B cell (primary cell): ENCODE measurements at regions of chr1 and their contacts with region 1.

Region 1: DNA sequence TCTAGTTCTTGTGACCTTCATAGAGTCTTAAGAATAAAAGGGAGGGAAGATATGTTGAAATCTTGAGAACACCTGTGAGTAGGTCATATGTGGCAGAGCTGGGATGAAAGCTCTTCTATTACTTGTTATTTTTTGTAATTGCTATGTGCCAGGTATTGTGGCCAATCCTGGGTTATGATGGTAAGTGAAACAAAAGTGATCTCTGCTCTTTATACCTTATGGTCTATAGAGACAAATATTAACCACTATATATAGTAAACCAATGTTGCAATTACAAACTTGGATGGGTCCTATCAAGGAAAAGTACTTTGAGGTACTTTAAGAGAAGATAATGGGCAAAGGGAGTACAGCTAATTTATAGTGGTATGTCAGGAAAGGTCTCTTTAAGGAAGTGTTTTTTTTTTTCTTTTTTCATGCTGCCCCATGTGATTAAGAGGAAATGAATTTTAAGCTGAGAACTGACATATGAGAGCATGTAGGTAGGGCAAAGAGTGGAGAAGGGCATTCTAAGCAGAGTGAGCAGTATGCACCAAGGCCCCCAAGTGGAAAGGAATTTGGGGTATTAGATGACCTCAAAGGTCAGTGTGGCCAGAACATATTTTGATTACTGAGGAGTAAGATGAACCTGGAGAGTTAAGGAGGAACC is 43.3 kb downstream of the POU2F1 start:
- DNase-seq: peak; percentile 56
- ATAC-seq: peak; percentile 67
- H3K4me3 ChIP-seq: no peak overlapping the region
- H3K4me3 Mint-ChIP-seq: no peak overlapping the region
- H3K27ac ChIP-seq: peak overlapping the region in 1 of 2 donors; percentile 29
- H3K27ac Mint-ChIP-seq: no peak overlapping the region
- H3K4me1 ChIP-seq: peaks cover 37% of the 10 kb centered on the region in 2 donors
- H3K4me1 Mint-ChIP-seq: peaks cover 25% of the 10 kb centered on the region
- H3K27me3 ChIP-seq: no peaks in the 10 kb centered on the region
- H3K27me3 Mint-ChIP-seq: no peaks in the 10 kb centered on the region
- CTCF ChIP-seq: no peak

Region 2: DNA sequence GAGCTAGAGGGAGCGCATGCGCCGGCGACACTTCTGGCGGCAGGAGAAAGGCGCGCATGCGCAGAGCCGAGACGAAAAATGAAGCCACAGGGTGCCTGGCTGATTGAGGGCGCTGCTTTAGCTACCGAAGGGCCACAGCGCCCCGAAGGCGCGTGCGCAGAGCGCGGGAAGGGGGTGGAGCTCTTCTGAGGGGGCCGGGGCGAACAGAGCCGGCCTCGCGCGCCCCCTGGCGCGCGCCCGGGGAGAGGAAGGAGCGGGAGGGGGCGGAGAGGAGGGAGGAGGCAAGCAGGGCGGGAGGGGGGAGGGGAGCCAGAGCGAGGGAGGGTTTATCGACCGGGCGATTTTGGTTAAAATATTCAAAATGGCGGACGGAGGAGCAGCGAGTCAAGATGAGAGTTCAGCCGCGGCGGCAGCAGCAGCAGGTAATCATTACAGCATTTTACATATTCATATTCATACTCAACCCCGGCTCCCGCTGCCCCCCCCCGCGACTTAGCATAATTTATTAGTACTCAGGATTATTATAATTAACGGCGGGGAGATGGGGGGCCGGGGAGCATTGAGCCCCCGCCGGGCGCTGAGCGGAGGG is 43.3 kb before region 1 on chr1 and contains the start of gene POU2F1:
- CTCF ChIA-PET with region 1: interaction called, 17 read pairs
- POLR2A ChIA-PET with region 1: interaction called, 5 read pairs
- intact Hi-C with region 1: loop called (anchors 5 kb)
- DNase-seq: peak; percentile 100
- ATAC-seq: peak; percentile 72
- H3K4me3 ChIP-seq: peak within 1 kb of the TSS; percentile 70 to 99 (median 88)
- H3K4me3 Mint-ChIP-seq: peak within 1 kb of the TSS; percentile 93
- H3K27ac ChIP-seq: peak within 1 kb of the TSS; percentile 92 to 96
- H3K27ac Mint-ChIP-seq: peak within 1 kb of the TSS; percentile 98
- H3K4me1 ChIP-seq: peaks cover 23 to 26% of the 10 kb centered on the region in 2 donors
- H3K4me1 Mint-ChIP-seq: peaks cover 42% of the 10 kb centered on the region
- H3K27me3 ChIP-seq: no peaks in the 10 kb centered on the region
- H3K27me3 Mint-ChIP-seq: no peaks in the 10 kb centered on the region
- CTCF ChIP-seq: peak; percentile 61
- total RNA-seq, gene POU2F1: 47.4 and 48.8 TPM in 2 replicates

Region 3: DNA sequence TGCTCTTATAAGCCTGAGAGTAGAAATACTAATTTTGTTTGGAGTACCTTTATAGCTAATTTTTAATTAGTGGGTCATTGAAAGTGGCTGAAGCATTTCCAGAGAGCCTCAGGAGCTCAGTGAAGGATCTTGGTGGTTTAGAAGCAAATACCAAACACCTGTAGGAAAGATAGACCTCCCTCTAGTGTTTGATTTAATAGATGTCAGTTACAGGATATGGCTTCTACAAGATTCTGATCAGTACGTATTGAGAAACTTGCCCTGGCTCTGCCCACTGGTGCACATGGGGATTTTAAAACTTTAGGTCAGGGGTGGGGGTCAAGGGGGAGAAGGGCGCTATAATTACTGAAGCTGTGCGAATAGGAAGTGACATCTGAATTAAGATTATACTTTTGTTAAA is 78.9 kb after region 1 on chr1:
- CTCF ChIA-PET with region 1: interaction called, 188 read pairs
- POLR2A ChIA-PET with region 1: no interaction called
- intact Hi-C with region 1: loop called (anchors 1 kb)
- DNase-seq: peak; percentile 61
- ATAC-seq: peak; percentile 58
- H3K4me3 ChIP-seq: no peak overlapping the region
- H3K4me3 Mint-ChIP-seq: no peak overlapping the region
- H3K27ac ChIP-seq: no peak overlapping the region
- H3K27ac Mint-ChIP-seq: no peak overlapping the region
- H3K4me1 ChIP-seq: peaks cover 4 to 7% of the 10 kb centered on the region in 2 donors
- H3K4me1 Mint-ChIP-seq: peaks cover 17% of the 10 kb centered on the region
- H3K27me3 ChIP-seq: no peaks in the 10 kb centered on the region
- H3K27me3 Mint-ChIP-seq: no peaks in the 10 kb centered on the region
- CTCF ChIP-seq: peak; percentile 68

Region 4: GRCh38 chr1:167401260-167401873 is 137.4 kb after region 1 on chr1:
- CTCF ChIA-PET with region 1: interaction called, 38 read pairs
- POLR2A ChIA-PET with region 1: no interaction called
- intact Hi-C with region 1: loop called (anchors 1 kb)
- DNase-seq: peak; percentile 70
- ATAC-seq: peak; percentile 76
- H3K4me3 ChIP-seq: no peak overlapping the region
- H3K4me3 Mint-ChIP-seq: no peak overlapping the region
- H3K27ac ChIP-seq: no peak overlapping the region
- H3K27ac Mint-ChIP-seq: peak overlapping the region; percentile 18
- H3K4me1 ChIP-seq: no peaks in the 10 kb centered on the region
- H3K4me1 Mint-ChIP-seq: no peaks in the 10 kb centered on the region
- H3K27me3 ChIP-seq: no peaks in the 10 kb centered on the region
- H3K27me3 Mint-ChIP-seq: no peaks in the 10 kb centered on the region
- CTCF ChIP-seq: peak; percentile 82

Region 5: GRCh38 chr1:167447521-167448136 is 183.7 kb after region 1 on chr1:
- CTCF ChIA-PET with region 1: interaction called, 89 read pairs
- POLR2A ChIA-PET with region 1: interaction called, 4 read pairs
- intact Hi-C with region 1: loop called (anchors 1 kb)
- DNase-seq: peak; percentile 70
- ATAC-seq: peak; percentile 96
- H3K4me3 ChIP-seq: peak overlapping the region in 3 of 5 experiments; percentile 4 to 37 (median 6)
- H3K4me3 Mint-ChIP-seq: peak overlapping the region; percentile 70
- H3K27ac ChIP-seq: no peak overlapping the region
- H3K27ac Mint-ChIP-seq: peak overlapping the region; percentile 80
- H3K4me1 ChIP-seq: peaks cover 13 to 28% of the 10 kb centered on the region in 2 donors
- H3K4me1 Mint-ChIP-seq: peaks cover 22% of the 10 kb centered on the region
- H3K27me3 ChIP-seq: no peaks in the 10 kb centered on the region
- H3K27me3 Mint-ChIP-seq: no peaks in the 10 kb centered on the region
- CTCF ChIP-seq: no peak

Region 6: GRCh38 chr1:167499664-167500101 is 235.7 kb after region 1 on chr1:
- CTCF ChIA-PET with region 1: no interaction called
- POLR2A ChIA-PET with region 1: no interaction called
- intact Hi-C with region 1: no loop called
- DNase-seq: peak; percentile 88
- ATAC-seq: peak; percentile 98
- H3K4me3 ChIP-seq: peak overlapping the region in 1 of 5 experiments; percentile 34
- H3K4me3 Mint-ChIP-seq: peak overlapping the region; percentile 68
- H3K27ac ChIP-seq: no peak overlapping the region
- H3K27ac Mint-ChIP-seq: peak overlapping the region; percentile 18
- H3K4me1 ChIP-seq: peaks cover 39% of the 10 kb centered on the region in 2 donors
- H3K4me1 Mint-ChIP-seq: peaks cover 39% of the 10 kb centered on the region
- H3K27me3 ChIP-seq: peaks cover 0 to 66% (median 55%) of the 10 kb centered on the region in 4 experiments
- H3K27me3 Mint-ChIP-seq: peaks cover 75% of the 10 kb centered on the region
- CTCF ChIP-seq: no peak

Region 7: GRCh38 chr1:167553136-167554027 is 289.4 kb after region 1 on chr1 and contains the start of gene CREG1:
- CTCF ChIA-PET with region 1: interaction called, 3 read pairs
- POLR2A ChIA-PET with region 1: no interaction called
- intact Hi-C with region 1: loop called (anchors 1 kb)
- DNase-seq: peak; percentile 92
- ATAC-seq: peak; percentile 98
- H3K4me3 ChIP-seq: peak within 1 kb of the TSS; percentile 56 to 82 (median 68)
- H3K4me3 Mint-ChIP-seq: peak within 1 kb of the TSS; percentile 96
- H3K27ac ChIP-seq: no peak within 1 kb of the TSS
- H3K27ac Mint-ChIP-seq: peak within 1 kb of the TSS; percentile 82
- H3K4me1 ChIP-seq: peaks cover 10 to 23% of the 10 kb centered on the region in 2 donors
- H3K4me1 Mint-ChIP-seq: peaks cover 23% of the 10 kb centered on the region
- H3K27me3 ChIP-seq: no peaks in the 10 kb centered on the region
- H3K27me3 Mint-ChIP-seq: no peaks in the 10 kb centered on the region
- CTCF ChIP-seq: no peak
- total RNA-seq, gene CREG1: 8.1 and 8.4 TPM in 2 replicates